ENCODE measurements at regions of chr4 and their contacts with region 1.

Region 1: GRCh38 chr4:138090150-138090917 is 151.8 kb downstream of the SLC7A11 start:
- DNase-seq: peak; percentile 90
- H3K4me3 Mint-ChIP-seq: peak overlapping the region; percentile 75
- H3K27ac Mint-ChIP-seq: no peak overlapping the region
- H3K4me1 Mint-ChIP-seq: peaks cover 7% of the 10 kb centered on the region
- H3K27me3 Mint-ChIP-seq: no peaks in the 10 kb centered on the region
- CTCF ChIP-seq: peak; percentile 58

Region 2: GRCh38 chr4:137283737-137284136 is 806.6 kb before region 1 on chr4:
- CTCF ChIA-PET with region 1: no interaction called
- POLR2A ChIA-PET with region 1: no interaction called
- intact Hi-C with region 1: loop called (anchors 10 kb)
- DNase-seq: peak; percentile 14
- H3K4me3 Mint-ChIP-seq: no peak overlapping the region
- H3K27ac Mint-ChIP-seq: no peak overlapping the region
- H3K4me1 Mint-ChIP-seq: peaks cover 12% of the 10 kb centered on the region
- H3K27me3 Mint-ChIP-seq: no peaks in the 10 kb centered on the region
- CTCF ChIP-seq: peak; percentile 47

Region 3: DNA sequence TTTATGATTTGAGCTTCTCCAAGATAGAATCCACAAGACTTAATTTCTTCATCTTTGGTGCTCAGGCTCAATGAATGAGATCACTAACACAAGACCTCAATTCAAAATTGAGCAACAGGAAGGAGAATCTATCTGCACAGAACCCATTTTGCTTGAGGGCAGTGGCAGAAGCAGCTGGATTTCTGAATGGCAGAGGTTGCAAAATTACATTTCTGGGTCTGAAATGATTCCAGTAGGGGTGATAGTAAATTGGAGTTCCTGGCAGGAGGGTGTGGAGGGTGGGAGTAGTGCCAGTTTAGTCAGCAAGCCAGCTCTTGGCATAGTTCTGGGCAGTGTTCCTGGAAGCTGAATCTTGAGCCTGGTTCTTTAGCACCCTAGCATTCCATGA is 129.3 kb before region 1 on chr4:
- CTCF ChIA-PET with region 1: interaction called, 11 read pairs
- POLR2A ChIA-PET with region 1: interaction called, 3 read pairs
- intact Hi-C with region 1: no loop called
- DNase-seq: peak; percentile 98
- H3K4me3 Mint-ChIP-seq: peak overlapping the region; percentile 66
- H3K27ac Mint-ChIP-seq: peak overlapping the region; percentile 97
- H3K4me1 Mint-ChIP-seq: peaks cover 42% of the 10 kb centered on the region
- H3K27me3 Mint-ChIP-seq: no peaks in the 10 kb centered on the region
- CTCF ChIP-seq: no peak

Region 4: GRCh38 chr4:138053641-138054301 is 36.6 kb before region 1 on chr4:
- CTCF ChIA-PET with region 1: interaction called, 21 read pairs
- POLR2A ChIA-PET with region 1: interaction called, 5 read pairs
- intact Hi-C with region 1: no loop called
- DNase-seq: peak; percentile 88
- H3K4me3 Mint-ChIP-seq: peak overlapping the region; percentile 50
- H3K27ac Mint-ChIP-seq: peak overlapping the region; percentile 16
- H3K4me1 Mint-ChIP-seq: peaks cover 18% of the 10 kb centered on the region
- H3K27me3 Mint-ChIP-seq: no peaks in the 10 kb centered on the region
- CTCF ChIP-seq: no peak

Region 5: DNA sequence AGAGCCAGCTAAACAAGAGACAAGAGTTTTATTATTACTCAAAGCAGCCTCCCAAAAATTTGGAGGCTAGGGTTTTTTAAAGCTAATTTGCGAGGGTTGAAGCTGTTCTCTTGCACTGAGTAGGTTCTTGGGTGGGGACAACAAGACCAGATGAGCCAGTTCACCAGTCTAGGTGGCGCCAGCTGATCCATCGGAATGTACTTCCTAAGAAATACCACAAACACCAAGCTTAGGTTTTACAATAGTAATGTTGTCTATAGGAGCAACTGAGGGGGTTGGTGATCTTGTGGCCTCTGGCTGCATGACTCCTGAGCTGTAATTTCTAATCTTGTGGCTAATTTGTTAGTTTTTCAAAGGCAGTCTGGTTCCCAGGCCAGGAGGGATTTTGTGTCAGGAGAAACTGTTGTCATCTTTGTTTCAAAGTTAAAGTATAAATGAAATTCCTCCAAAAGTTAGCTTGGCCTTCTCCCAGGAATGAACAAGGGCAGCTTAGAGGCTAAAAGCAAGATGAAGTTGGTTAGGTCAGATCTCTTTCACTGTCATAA is 21.2 kb after region 1 on chr4:
- CTCF ChIA-PET with region 1: interaction called, 10 read pairs
- POLR2A ChIA-PET with region 1: no interaction called
- intact Hi-C with region 1: no loop called
- DNase-seq: no peak
- H3K4me3 Mint-ChIP-seq: no peak overlapping the region
- H3K27ac Mint-ChIP-seq: no peak overlapping the region
- H3K4me1 Mint-ChIP-seq: no peaks in the 10 kb centered on the region
- H3K27me3 Mint-ChIP-seq: no peaks in the 10 kb centered on the region
- CTCF ChIP-seq: no peak

Region 6: DNA sequence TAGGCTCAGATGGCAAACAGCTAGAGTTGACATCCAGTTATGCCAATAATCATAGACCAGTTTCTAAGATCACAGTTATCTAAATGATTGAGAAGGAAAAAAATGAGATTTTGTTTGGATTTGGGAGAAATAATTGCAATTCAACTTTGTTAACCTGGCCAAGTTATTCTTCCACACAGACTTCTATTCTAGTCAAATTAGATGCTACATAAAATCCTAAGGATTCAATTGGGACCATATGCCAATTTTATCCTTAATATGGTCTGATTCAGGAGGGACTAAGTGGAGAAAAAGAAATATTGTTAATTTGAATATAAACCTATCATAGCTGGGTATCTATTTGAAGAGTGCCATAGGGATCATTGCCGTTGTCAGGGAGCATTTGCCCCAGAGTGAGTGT is 330.1 kb after region 1 on chr4:
- CTCF ChIA-PET with region 1: no interaction called
- POLR2A ChIA-PET with region 1: no interaction called
- intact Hi-C with region 1: no loop called
- DNase-seq: no peak
- H3K4me3 Mint-ChIP-seq: no peak overlapping the region
- H3K27ac Mint-ChIP-seq: no peak overlapping the region
- H3K4me1 Mint-ChIP-seq: peaks cover 5% of the 10 kb centered on the region
- H3K27me3 Mint-ChIP-seq: no peaks in the 10 kb centered on the region
- CTCF ChIP-seq: no peak

Region 7: DNA sequence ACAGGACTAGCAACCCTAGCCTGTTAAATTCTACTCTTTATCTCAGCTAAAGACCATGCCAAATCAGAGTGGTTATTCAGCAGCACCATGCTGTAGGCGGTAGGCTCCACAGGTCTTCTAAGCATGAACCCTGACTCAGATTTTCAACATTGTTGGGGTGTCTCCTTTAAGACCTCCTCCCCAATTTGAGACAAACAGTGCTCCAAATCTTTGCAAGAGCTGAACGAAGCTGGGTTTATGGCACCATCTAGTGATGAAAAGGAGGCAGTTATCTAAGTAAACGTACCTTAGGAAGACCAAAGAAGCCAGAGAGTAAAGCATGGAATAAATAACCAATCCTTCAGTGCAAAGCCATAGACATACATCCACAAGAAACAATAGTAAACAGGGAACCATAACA is 486.4 kb after region 1 on chr4:
- CTCF ChIA-PET with region 1: interaction called, 13 read pairs
- POLR2A ChIA-PET with region 1: no interaction called
- intact Hi-C with region 1: loop called (anchors 2 kb)
- DNase-seq: peak; percentile 58
- H3K4me3 Mint-ChIP-seq: no peak overlapping the region
- H3K27ac Mint-ChIP-seq: no peak overlapping the region
- H3K4me1 Mint-ChIP-seq: no peaks in the 10 kb centered on the region
- H3K27me3 Mint-ChIP-seq: no peaks in the 10 kb centered on the region
- CTCF ChIP-seq: peak; percentile 51